Endothelial cell of umbilical vein (primary cell): ENCODE measurements at regions of chr19 and their contacts with region 1.

Region 1: GRCh38 chr19:3591876-3592613 is 6.8 kb downstream of the GIPC3 start:
- DNase-seq: no peak
- H3K4me3 ChIP-seq: no peak overlapping the region
- H3K27ac ChIP-seq: no peak overlapping the region
- H3K4me1 ChIP-seq: no peaks in the 10 kb centered on the region
- H3K27me3 ChIP-seq: peaks cover 0 to 2% of the 10 kb centered on the region in 2 experiments
- CTCF ChIP-seq: no peak
- POLR2A ChIP-seq: no peak

Region 2: GRCh38 chr19:3360421-3361383 is 231.3 kb before region 1 on chr19:
- CTCF ChIA-PET with region 1: no interaction called
- POLR2A ChIA-PET with region 1: no interaction called
- dilution Hi-C with region 1: no loop called
- intact Hi-C with region 1: no loop called
- DNase-seq: peak; percentile 47
- H3K4me3 ChIP-seq: peak overlapping the region; percentile 52 to 94 (median 68)
- H3K27ac ChIP-seq: no peak overlapping the region
- H3K4me1 ChIP-seq: peaks cover 16% of the 10 kb centered on the region
- H3K27me3 ChIP-seq: no peaks in the 10 kb centered on the region
- CTCF ChIP-seq: peak in 1 of 2 donors; percentile 1
- POLR2A ChIP-seq: peak; percentile 39

Region 3: DNA sequence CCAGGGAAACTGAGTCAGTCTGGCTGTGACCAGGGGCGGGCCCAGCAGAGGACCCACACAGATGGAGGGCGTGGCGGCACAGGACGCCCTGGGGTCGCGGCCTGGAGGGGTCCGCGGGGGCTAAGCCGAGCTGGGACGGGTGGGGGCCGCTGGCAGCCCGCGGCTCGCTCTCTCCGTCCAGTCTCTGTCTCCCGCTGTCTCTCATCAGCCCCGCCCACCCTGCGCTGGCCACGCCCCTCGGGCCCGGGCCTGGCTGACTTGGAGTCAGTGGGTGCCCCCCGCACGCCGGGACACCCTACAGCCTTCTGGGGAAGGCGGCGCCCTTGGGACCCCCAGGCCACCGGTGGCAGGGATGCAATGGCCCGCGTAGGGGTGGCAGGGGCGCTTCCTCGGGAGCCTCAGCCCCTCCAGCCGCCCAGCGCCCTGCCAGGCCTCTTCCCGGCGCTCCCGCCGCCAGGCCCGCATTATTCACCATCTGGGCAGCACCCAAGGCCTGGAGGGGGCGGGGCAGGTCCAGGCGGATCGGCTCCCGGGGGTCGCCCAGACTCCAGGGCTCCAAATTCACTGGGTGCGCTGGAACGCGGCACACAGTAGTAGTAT is 14.7 kb after region 1 on chr19 and contains the start of gene TBXA2R:
- CTCF ChIA-PET with region 1: interaction called, 10 read pairs
- POLR2A ChIA-PET with region 1: no interaction called
- dilution Hi-C with region 1: no loop called
- intact Hi-C with region 1: no loop called
- DNase-seq: peak; percentile 69
- H3K4me3 ChIP-seq: peak within 1 kb of the TSS; percentile 39 to 48 (median 39)
- H3K27ac ChIP-seq: peak within 1 kb of the TSS; percentile 34
- H3K4me1 ChIP-seq: peaks cover 23% of the 10 kb centered on the region
- H3K27me3 ChIP-seq: no peaks in the 10 kb centered on the region
- CTCF ChIP-seq: no peak
- POLR2A ChIP-seq: peak; percentile 17
- total RNA-seq, gene TBXA2R: 2.9 and 3.4 TPM in 2 replicates